T-cell (primary cell): ENCODE measurements at regions of chr10 and their contacts with region 1.

Region 1: DNA sequence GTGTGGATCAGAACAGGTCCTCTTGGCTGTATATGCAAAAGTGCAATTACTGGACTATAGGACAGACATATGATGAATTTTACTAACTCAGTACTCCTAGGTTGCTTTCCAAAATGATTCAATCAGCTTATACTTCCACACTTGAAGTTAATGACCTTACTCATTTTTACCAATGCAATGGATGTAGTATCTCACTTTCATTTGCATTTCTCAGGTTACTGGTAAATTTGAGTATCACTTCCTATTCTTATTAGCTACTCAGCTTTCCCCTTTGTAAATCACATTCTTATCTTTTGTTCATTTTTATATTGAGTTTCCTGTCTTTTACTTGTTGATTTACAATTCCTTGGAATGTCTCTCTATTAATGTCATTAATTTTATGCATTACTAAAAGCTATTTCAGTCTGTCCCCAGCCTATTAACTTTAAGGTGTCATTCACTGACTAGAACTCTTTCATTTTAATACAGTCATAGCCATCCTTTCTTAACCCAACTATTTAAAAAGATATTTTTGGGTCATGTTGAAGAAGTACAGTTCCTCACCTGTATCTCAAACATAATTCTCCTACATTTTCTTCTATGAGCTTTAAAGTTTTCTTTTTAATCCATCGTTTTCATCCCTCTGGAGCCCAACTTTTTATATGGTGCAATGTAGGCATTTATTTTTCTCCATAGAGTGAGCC is 88.6 kb downstream of the VIM start:
- DNase-seq: no peak
- ATAC-seq: no peak
- H3K4me3 ChIP-seq: no peak overlapping the region
- H3K4me3 Mint-ChIP-seq: no peak overlapping the region
- H3K27ac ChIP-seq: no peak overlapping the region
- H3K27ac Mint-ChIP-seq: no peak overlapping the region
- H3K4me1 ChIP-seq: no peaks in the 10 kb centered on the region
- H3K4me1 Mint-ChIP-seq: no peaks in the 10 kb centered on the region
- H3K27me3 ChIP-seq: no peaks in the 10 kb centered on the region
- H3K27me3 Mint-ChIP-seq: peaks cover 7 to 9% of the 10 kb centered on the region in 2 donors

Region 2: DNA sequence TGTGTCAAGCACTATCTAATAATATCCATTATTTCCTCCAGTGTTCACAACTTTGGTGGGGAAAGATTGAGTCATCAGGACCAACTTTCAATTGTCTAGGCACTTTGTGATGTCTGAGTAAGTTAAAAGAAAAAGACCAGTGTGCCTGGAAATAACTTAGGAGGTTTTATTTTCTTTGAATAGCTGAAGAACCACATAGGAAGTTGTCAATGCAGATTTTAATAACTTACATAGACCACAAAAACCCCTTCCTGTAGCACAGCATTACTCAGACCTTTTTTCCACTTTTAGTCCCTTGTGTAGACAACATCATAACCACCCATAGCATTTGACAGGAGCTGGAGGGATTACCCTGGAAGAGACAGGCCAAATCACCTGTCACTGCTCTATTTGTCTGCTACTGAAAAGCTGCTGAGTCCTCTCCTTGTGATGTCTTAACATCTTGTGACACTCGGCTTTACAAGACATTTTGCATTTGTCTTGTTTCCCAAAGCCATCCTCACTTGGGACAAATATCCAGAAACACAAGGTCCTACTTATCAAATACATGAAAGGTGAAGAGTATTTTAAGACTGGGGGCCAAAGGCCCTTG is 1121.4 kb before region 1 on chr10:
- CTCF ChIA-PET with region 1: interaction called in 1 of 2 experiments, 12 read pairs
- POLR2A ChIA-PET with region 1: no interaction called
- DNase-seq: no peak
- ATAC-seq: peak in 2 of 4 experiments; percentile 27 to 31
- H3K4me3 ChIP-seq: no peak overlapping the region
- H3K4me3 Mint-ChIP-seq: no peak overlapping the region
- H3K27ac ChIP-seq: no peak overlapping the region
- H3K27ac Mint-ChIP-seq: no peak overlapping the region
- H3K4me1 ChIP-seq: no peaks in the 10 kb centered on the region
- H3K4me1 Mint-ChIP-seq: peaks cover 0 to 15% (median 10%) of the 10 kb centered on the region in 3 donors
- H3K27me3 ChIP-seq: no peaks in the 10 kb centered on the region
- H3K27me3 Mint-ChIP-seq: no peaks in the 10 kb centered on the region

Region 3: GRCh38 chr10:16544129-16544528 is 772.5 kb before region 1 on chr10:
- CTCF ChIA-PET with region 1: interaction called in 1 of 2 experiments, 11 read pairs
- POLR2A ChIA-PET with region 1: no interaction called
- DNase-seq: no peak
- ATAC-seq: no peak
- H3K4me3 ChIP-seq: no peak overlapping the region
- H3K4me3 Mint-ChIP-seq: no peak overlapping the region
- H3K27ac ChIP-seq: no peak overlapping the region
- H3K27ac Mint-ChIP-seq: no peak overlapping the region
- H3K4me1 ChIP-seq: no peaks in the 10 kb centered on the region
- H3K4me1 Mint-ChIP-seq: peaks cover 0 to 4% (median 1%) of the 10 kb centered on the region in 3 donors
- H3K27me3 ChIP-seq: peaks cover 0 to 9% of the 10 kb centered on the region in 2 experiments
- H3K27me3 Mint-ChIP-seq: peaks cover 22 to 32% of the 10 kb centered on the region in 2 donors